ENCODE measurements at regions of chr1 and their contacts with region 1.

Region 1: DNA sequence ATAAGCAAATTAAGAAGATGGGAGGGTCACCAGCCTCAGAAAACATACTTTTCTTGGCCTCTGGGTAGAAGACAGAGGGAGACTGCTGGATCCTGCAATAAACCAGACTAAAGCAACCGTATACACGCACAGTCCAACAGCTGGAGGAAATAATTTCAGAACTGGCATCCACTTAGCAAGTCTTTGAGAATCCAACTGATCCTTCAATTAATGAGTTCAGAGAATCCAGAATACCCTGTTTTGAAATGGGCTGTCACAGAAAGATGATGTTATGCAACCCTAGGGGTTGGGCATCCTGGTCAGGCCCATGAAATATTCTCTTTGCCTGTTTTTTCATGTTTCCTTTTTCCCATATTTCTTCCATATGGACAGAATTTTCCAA is 134.0 kb upstream of the MAGI3 start:
- DNase-seq: no peak
- ATAC-seq: no peak
- H3K4me3 ChIP-seq: no peak overlapping the region
- H3K27ac ChIP-seq: no peak overlapping the region
- H3K4me1 ChIP-seq: no peaks in the 10 kb centered on the region
- H3K27me3 ChIP-seq: no peaks in the 10 kb centered on the region; the same call in 1 of the 2 replicates
- CTCF ChIP-seq: no peak

Region 2: DNA sequence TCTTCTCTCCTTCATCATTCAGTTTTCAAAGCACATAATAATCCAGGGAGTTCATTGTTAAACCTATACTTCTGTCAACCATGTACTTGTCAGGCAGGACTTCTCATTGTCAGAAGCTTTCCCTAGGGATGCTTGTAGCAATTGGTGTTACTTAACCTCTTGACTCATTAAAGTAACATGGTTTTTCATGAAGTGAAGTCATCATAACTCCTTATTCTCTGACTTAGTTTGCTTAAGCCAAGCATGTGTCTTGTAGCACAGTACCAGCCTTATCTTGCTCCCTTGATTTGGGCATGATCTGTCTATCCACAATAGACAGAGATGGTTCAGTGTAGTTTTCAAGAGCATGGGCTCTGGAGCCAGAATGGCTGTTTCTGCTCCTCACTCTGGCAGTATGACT is 138.1 kb before region 1 on chr1:
- CTCF ChIA-PET with region 1: no interaction called
- POLR2A ChIA-PET with region 1: no interaction called
- in situ Hi-C with region 1: no loop called
- intact Hi-C with region 1: no loop called
- DNase-seq: no peak
- ATAC-seq: no peak
- H3K4me3 ChIP-seq: no peak overlapping the region
- H3K27ac ChIP-seq: no peak overlapping the region
- H3K4me1 ChIP-seq: no peaks in the 10 kb centered on the region
- H3K27me3 ChIP-seq: no peaks in the 10 kb centered on the region
- CTCF ChIP-seq: no peak

Region 3: GRCh38 chr1:113269168-113269963 is 13.0 kb after region 1 on chr1:
- CTCF ChIA-PET with region 1: no interaction called
- POLR2A ChIA-PET with region 1: no interaction called
- in situ Hi-C with region 1: no loop called
- intact Hi-C with region 1: no loop called
- DNase-seq: no peak
- ATAC-seq: no peak
- H3K4me3 ChIP-seq: no peak overlapping the region
- H3K27ac ChIP-seq: no peak overlapping the region
- H3K4me1 ChIP-seq: no peaks in the 10 kb centered on the region
- H3K27me3 ChIP-seq: peaks cover 2% of the 10 kb centered on the region; the same call in 1 of the 2 replicates
- CTCF ChIP-seq: no peak

Region 4: GRCh38 chr1:113320972-113321690 is 64.8 kb after region 1 on chr1:
- CTCF ChIA-PET with region 1: no interaction called
- POLR2A ChIA-PET with region 1: interaction called, 10 read pairs
- in situ Hi-C with region 1: no loop called
- intact Hi-C with region 1: no loop called
- DNase-seq: no peak
- ATAC-seq: no peak
- H3K4me3 ChIP-seq: no peak overlapping the region
- H3K27ac ChIP-seq: no peak overlapping the region
- H3K4me1 ChIP-seq: no peaks in the 10 kb centered on the region
- H3K27me3 ChIP-seq: no peaks in the 10 kb centered on the region
- CTCF ChIP-seq: no peak

Region 5: GRCh38 chr1:113508364-113509164 is 252.2 kb after region 1 on chr1:
- CTCF ChIA-PET with region 1: no interaction called
- POLR2A ChIA-PET with region 1: no interaction called
- in situ Hi-C with region 1: no loop called
- intact Hi-C with region 1: no loop called
- DNase-seq: no peak
- ATAC-seq: no peak
- H3K4me3 ChIP-seq: no peak overlapping the region
- H3K27ac ChIP-seq: no peak overlapping the region
- H3K4me1 ChIP-seq: no peaks in the 10 kb centered on the region
- H3K27me3 ChIP-seq: no peaks in the 10 kb centered on the region
- CTCF ChIP-seq: no peak

Measured in Panc1 (cell line).